Activated CD8-positive, alpha-beta T cell treated with anti-CD3 and anti-CD28 coated beads for 36 hours (primary cell): ENCODE measurements at regions of chr1 and their contacts with region 1.

Region 1: GRCh38 chr1:223748773-223749733 is 36.7 kb downstream of the CAPN2 start:
- DNase-seq: peak; percentile 70
- ATAC-seq: peak; percentile 85
- H3K4me3 Mint-ChIP-seq: peak overlapping the region; percentile 58
- H3K27ac Mint-ChIP-seq: no peak overlapping the region
- H3K4me1 Mint-ChIP-seq: peaks cover 9% of the 10 kb centered on the region
- H3K27me3 Mint-ChIP-seq: no peaks in the 10 kb centered on the region
- CTCF ChIP-seq: peak; percentile 99

Region 2: DNA sequence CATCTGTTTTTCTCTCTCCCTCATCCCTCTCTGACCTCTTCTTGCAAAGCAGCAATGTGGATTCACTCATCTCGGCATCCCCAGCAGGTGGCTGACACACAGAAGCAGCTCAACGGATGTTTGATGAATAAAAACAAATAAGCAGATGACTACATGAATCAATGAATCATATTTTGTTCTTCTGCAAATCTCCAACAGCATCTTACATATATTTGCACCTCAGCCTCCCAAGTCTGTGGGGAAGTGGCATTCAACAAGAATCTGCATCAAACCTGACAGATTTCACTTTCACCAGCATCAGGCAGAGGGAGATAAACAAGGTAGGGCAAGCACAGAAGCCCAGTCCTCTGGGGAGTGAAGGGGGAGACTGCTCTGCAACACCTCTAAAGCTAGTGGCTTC is 117.6 kb before region 1 on chr1:
- CTCF ChIA-PET with region 1: no interaction called
- POLR2A ChIA-PET with region 1: no interaction called
- intact Hi-C with region 1: no loop called
- DNase-seq: no peak
- ATAC-seq: no peak
- H3K4me3 Mint-ChIP-seq: no peak overlapping the region
- H3K27ac Mint-ChIP-seq: no peak overlapping the region
- H3K4me1 Mint-ChIP-seq: no peaks in the 10 kb centered on the region
- H3K27me3 Mint-ChIP-seq: peaks cover 6% of the 10 kb centered on the region
- CTCF ChIP-seq: no peak

Region 3: GRCh38 chr1:223695941-223696340 is 53.1 kb before region 1 on chr1:
- CTCF ChIA-PET with region 1: interaction called, 95 read pairs
- POLR2A ChIA-PET with region 1: interaction called, 4 read pairs
- intact Hi-C with region 1: loop called (anchors 2 kb)
- DNase-seq: no peak
- ATAC-seq: no peak
- H3K4me3 Mint-ChIP-seq: no peak overlapping the region
- H3K27ac Mint-ChIP-seq: no peak overlapping the region
- H3K4me1 Mint-ChIP-seq: peaks cover 15% of the 10 kb centered on the region
- H3K27me3 Mint-ChIP-seq: no peaks in the 10 kb centered on the region
- CTCF ChIP-seq: no peak

Region 4: DNA sequence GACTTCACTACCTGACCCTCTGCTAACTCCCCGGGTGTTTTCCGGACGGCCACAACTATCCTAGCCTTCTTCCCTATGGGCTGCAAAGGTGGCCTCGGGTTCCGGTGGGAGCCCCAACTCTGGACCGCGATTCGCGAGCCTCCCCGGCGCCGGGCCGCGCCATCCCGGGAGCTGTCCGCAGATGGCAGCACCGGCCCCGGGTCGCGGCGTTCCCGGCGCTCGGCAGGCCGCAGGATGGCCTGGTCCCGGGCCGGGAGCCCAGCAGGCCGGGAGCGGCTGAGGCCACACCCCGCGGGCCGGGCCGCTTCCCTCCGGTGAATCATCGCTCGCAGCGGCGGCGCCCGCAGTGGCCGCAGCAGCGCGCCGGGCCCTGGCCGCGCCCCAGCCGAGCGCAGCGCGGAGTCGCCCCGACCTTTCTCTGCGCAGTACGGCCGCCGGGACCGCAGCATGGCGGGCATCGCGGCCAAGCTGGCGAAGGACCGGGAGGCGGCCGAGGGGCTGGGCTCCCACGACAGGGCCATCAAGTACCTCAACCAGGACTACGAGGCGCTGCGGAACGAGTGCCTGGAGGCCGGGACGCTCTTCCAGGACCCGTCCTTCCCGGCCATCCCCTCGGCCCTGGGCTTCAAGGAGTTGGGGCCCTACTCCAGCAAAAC is 36.7 kb before region 1 on chr1 and contains the start of gene CAPN2:
- CTCF ChIA-PET with region 1: interaction called, 60 read pairs
- POLR2A ChIA-PET with region 1: interaction called, 10 read pairs
- intact Hi-C with region 1: loop called (anchors 5 kb)
- DNase-seq: peak; percentile 54
- ATAC-seq: peak; percentile 54
- H3K4me3 Mint-ChIP-seq: peak within 1 kb of the TSS; percentile 86
- H3K27ac Mint-ChIP-seq: peak within 1 kb of the TSS; percentile 81
- H3K4me1 Mint-ChIP-seq: peaks cover 51% of the 10 kb centered on the region
- H3K27me3 Mint-ChIP-seq: no peaks in the 10 kb centered on the region
- CTCF ChIP-seq: peak; percentile 51
- total RNA-seq, gene CAPN2: 31.5 to 33.6 TPM

Region 5: GRCh38 chr1:223732992-223733798 is 15.9 kb before region 1 on chr1:
- CTCF ChIA-PET with region 1: interaction called, 23 read pairs
- POLR2A ChIA-PET with region 1: no interaction called
- intact Hi-C with region 1: no loop called
- DNase-seq: no peak
- ATAC-seq: no peak
- H3K4me3 Mint-ChIP-seq: no peak overlapping the region
- H3K27ac Mint-ChIP-seq: no peak overlapping the region
- H3K4me1 Mint-ChIP-seq: peaks cover 24% of the 10 kb centered on the region
- H3K27me3 Mint-ChIP-seq: no peaks in the 10 kb centered on the region
- CTCF ChIP-seq: no peak

Region 6: GRCh38 chr1:223759273-223759672 is 10.2 kb after region 1 on chr1:
- CTCF ChIA-PET with region 1: interaction called, 16 read pairs
- POLR2A ChIA-PET with region 1: no interaction called
- intact Hi-C with region 1: no loop called
- DNase-seq: no peak
- ATAC-seq: no peak
- H3K4me3 Mint-ChIP-seq: no peak overlapping the region
- H3K27ac Mint-ChIP-seq: no peak overlapping the region
- H3K4me1 Mint-ChIP-seq: no peaks in the 10 kb centered on the region
- H3K27me3 Mint-ChIP-seq: no peaks in the 10 kb centered on the region
- CTCF ChIP-seq: no peak

Region 7: GRCh38 chr1:223780949-223781348 is 31.9 kb after region 1 on chr1:
- CTCF ChIA-PET with region 1: interaction called, 14 read pairs
- POLR2A ChIA-PET with region 1: interaction called, 3 read pairs
- intact Hi-C with region 1: no loop called
- DNase-seq: no peak
- ATAC-seq: no peak
- H3K4me3 Mint-ChIP-seq: no peak overlapping the region
- H3K27ac Mint-ChIP-seq: peak overlapping the region; percentile 53
- H3K4me1 Mint-ChIP-seq: peaks cover 12% of the 10 kb centered on the region
- H3K27me3 Mint-ChIP-seq: no peaks in the 10 kb centered on the region
- CTCF ChIP-seq: no peak

Region 8: GRCh38 chr1:223831755-223832636 is 82.9 kb after region 1 on chr1:
- CTCF ChIA-PET with region 1: no interaction called
- POLR2A ChIA-PET with region 1: no interaction called
- intact Hi-C with region 1: no loop called
- DNase-seq: no peak
- ATAC-seq: peak; percentile 69
- H3K4me3 Mint-ChIP-seq: peak overlapping the region; percentile 66
- H3K27ac Mint-ChIP-seq: peak overlapping the region; percentile 97
- H3K4me1 Mint-ChIP-seq: peaks cover 22% of the 10 kb centered on the region
- H3K27me3 Mint-ChIP-seq: no peaks in the 10 kb centered on the region
- CTCF ChIP-seq: no peak